RWPE1 (cell line): ENCODE measurements at regions of chr1 and their contacts with region 1.

Region 1: DNA sequence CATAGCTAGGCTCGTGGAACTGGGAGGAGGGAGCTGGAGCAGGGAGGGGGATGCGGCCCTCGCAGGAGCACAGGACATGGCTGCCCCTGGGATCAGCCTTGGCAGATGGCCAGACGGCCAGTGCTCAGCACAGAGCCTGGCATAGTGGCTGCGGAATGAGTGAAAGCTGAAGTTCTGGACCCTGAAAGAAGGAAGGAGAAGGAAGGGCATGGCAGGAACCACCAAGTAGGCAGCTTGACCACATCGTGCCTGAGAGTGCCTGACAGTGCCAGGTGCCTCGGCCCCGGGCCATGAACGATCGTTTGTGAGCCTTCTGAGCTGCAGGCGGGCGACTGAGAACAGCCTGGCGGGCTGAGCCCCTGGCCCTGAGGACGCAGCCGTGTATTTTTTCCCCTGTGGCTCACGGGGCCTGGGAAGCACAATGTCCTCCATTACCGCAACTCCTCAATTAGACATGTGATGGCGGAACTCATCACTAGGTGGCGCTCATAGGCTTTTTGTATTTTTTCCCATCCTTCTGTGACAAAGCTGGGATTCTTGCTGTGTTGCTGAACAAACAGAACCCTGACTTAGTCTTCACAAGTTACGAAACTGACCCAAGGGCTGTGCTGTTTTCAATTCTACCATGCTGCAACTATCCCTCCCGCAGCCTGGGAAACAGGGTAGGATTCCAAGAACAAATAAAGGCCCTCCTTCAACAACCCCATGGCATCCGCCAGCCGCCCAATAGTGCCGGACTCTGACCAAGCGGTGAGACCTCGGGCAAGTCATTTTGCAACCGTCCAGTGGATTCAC is 29.9 kb upstream of the TMEM61 start:
- DNase-seq: peak; percentile 80
- H3K27ac ChIP-seq: peak overlapping the region; percentile 79
- CTCF ChIP-seq: peak; percentile 79

Region 2: GRCh38 chr1:54754045-54754444 is 196.5 kb before region 1 on chr1:
- CTCF ChIA-PET with region 1: no interaction called
- POLR2A ChIA-PET with region 1: no interaction called
- DNase-seq: no peak
- H3K27ac ChIP-seq: no peak overlapping the region
- CTCF ChIP-seq: no peak

Region 3: GRCh38 chr1:54989968-54990810 is 39.6 kb after region 1 on chr1:
- CTCF ChIA-PET with region 1: interaction called, 10 read pairs
- POLR2A ChIA-PET with region 1: no interaction called
- DNase-seq: no peak
- H3K27ac ChIP-seq: no peak overlapping the region
- CTCF ChIP-seq: no peak

Region 4: DNA sequence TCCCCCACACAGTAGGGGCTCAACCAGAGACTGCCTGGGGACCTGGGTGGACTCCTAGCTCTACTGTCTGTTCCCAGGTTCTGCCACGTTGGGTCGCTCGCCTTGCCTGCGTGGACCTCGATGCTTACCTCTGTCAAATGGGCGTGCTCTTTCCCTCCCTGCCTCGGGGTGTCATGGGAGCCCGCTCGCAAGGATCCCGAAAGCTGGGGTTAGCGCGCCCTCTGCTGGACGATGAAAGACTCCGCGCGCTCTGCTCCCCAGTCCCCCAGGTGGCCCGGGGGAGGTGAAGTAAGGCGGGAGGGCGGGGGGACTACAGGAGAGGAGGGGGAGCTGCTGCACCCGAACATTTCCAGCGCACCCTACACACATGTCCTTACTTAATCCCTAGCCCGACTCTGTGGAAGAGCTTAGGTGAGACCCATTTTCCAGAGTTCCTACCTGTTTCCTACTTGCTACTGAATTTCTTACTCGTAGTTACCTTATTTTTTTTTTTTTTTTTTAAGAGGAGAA is 45.8 kb after region 1 on chr1:
- CTCF ChIA-PET with region 1: interaction called, 60 read pairs
- POLR2A ChIA-PET with region 1: no interaction called
- DNase-seq: peak; percentile 90
- H3K27ac ChIP-seq: no peak overlapping the region
- CTCF ChIP-seq: peak; percentile 85